Left cardiac atrium (tissue), 4 donors: ENCODE measurements at regions of chr1 and their contacts with region 1.

Region 1: GRCh38 chr1:36099681-36100341 is 11.1 kb downstream of the ADPRS start:
- DNase-seq: peak; percentile 81
- ATAC-seq: peak; percentile 83 to 91

Region 2: DNA sequence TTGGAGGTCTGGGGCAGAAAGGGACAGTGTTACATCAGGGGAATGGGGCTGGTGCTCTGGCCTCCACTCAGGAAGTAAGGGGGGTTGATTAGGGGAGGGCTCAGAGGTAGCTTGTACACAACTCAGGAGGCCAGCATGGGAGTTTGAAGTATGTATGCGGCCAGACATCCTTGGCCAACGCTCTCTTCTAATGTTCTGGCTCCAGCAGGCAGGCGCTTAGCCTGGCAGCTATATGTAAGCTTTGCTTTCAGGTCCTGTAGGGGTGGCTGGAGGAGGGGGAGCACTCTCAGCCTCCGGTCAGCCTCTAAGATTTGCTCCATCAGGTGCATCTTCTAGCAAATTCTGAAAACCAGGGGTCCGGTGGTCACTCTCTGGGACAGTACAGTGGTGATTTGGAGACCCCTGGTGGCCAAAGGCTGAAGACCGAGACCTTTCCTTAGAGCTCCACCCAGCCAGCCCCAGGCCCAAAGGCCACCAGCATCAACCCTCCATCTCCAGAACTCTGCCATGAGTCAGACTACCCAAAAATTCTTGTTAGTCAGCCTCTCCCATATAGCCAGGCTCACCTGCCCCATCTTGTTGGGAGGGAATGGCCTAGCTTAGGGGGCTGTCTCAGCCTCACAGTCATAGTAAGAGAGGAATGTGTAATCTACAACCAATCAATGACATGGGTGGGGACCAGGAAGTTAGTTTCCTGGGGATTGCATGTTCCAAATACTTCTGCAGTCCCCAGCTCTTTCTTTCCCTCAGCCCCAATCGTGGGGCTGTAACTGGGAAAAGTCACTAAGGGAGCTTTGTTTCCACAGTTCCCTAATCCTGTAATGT is 34.9 kb after region 1 on chr1:
- intact Hi-C with region 1: loop called in 1 of 2 experiments (anchors 2 kb)
- DNase-seq: peak; percentile 61
- ATAC-seq: peak; percentile 65 to 75

Region 3: GRCh38 chr1:36187800-36188593 is 88.2 kb after region 1 on chr1:
- intact Hi-C with region 1: loop called in 1 of 2 experiments (anchors 2 kb)
- DNase-seq: peak; percentile 87
- ATAC-seq: peak; percentile 93 to 94